Astrocyte of the cerebellum (primary cell): ENCODE measurements at regions of chr2 and their contacts with region 1.

Region 1: DNA sequence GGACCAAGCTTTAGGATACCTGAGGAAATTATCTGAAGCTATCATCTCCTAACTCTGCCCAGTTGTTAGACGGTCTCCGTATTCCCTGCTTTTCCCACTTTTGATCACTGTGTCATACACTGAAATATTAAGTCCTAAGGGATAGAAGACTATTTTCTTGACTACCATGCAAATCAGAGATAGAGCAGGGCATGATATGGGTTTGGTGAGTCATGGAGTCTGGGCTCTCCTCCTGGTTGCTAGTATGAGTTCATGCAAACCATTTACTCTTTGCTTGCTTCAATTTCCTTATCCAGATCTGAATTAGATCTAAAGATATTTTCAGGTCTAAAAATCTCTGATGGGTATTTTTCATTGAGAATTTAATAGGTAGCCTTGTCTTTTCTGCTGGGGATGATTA is 55.0 kb downstream of the EHBP1 start:
- DNase-seq: peak; percentile 40
- H3K4me3 ChIP-seq: no peak overlapping the region
- CTCF ChIP-seq: no peak

Region 2: DNA sequence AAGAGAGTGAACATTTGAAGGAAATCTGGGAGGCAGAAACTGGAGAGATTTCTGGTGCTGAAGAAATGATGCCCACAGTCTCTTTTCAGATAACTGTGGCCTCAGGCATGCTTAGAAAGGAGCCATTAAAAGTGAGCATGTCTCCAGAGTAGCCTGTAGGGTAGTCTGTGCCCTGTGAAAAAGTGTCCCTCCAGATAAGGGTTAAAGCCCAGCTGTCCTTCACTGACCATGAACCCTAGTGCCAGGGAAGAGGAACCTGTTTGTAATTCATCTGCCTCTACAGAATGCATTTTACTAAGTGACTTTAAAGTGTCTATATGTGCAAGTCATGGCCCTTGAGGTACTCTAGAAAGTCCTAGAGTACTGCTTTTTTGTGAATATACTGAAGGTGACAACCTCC is 85.5 kb before region 1 on chr2:
- in situ Hi-C with region 1: loop called (anchors 5 kb)
- DNase-seq: no peak
- H3K4me3 ChIP-seq: no peak overlapping the region
- CTCF ChIP-seq: no peak

Region 3: GRCh38 chr2:62806231-62806630 is 45.7 kb after region 1 on chr2:
- in situ Hi-C with region 1: no loop called
- DNase-seq: no peak
- H3K4me3 ChIP-seq: no peak overlapping the region
- CTCF ChIP-seq: no peak